Natural killer cell (primary cell): ENCODE measurements at regions of chr2 and their contacts with region 1.

Region 1: DNA sequence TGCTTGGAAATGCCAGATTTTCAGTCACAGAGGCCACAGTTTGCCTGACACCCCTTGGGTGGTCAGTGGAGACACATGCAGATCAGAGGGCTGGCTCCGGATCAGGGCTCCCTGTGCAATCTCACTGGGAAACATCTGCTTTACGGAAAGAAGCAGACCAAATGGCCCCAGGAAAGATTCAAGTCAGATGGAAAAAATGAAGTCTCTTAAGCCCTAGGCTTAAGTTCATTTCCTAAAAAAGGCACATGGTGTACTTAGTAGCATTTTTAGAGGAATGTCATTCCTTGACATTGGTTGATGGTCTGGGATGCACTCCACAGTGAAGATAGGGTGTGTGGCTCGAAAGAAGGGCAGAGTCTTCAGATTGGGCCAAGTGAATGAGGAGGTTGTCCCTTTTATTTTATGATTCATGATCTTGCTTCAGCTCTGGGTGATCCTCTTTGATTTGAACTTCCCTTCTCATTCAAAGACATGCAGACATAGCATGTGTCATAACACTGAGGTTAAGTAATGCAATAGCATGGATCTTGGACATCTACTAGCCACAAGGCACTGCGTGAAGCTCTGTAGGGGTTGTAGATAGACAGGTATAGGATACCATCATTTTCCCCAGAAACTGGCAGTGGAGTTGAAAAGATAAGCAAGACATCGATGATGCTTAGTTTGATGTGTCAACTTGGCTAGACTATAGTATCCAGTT is 56.5 kb downstream of the KCNE4 start:
- DNase-seq: no peak
- ATAC-seq: no peak
- H3K4me3 ChIP-seq: no peak overlapping the region
- H3K4me3 Mint-ChIP-seq: no peak overlapping the region
- H3K27ac ChIP-seq: no peak overlapping the region
- H3K27ac Mint-ChIP-seq: no peak overlapping the region
- H3K4me1 ChIP-seq: no peaks in the 10 kb centered on the region
- H3K4me1 Mint-ChIP-seq: no peaks in the 10 kb centered on the region
- H3K27me3 ChIP-seq: no peaks in the 10 kb centered on the region
- H3K27me3 Mint-ChIP-seq: no peaks in the 10 kb centered on the region
- CTCF ChIP-seq: no peak

Region 2: GRCh38 chr2:223044092-223044836 is 64.2 kb before region 1 on chr2:
- intact Hi-C with region 1: loop called (anchors 2 kb)
- DNase-seq: no peak
- ATAC-seq: no peak
- H3K4me3 ChIP-seq: no peak overlapping the region
- H3K4me3 Mint-ChIP-seq: no peak overlapping the region
- H3K27ac ChIP-seq: no peak overlapping the region
- H3K27ac Mint-ChIP-seq: no peak overlapping the region
- H3K4me1 ChIP-seq: peaks cover 5% of the 10 kb centered on the region
- H3K4me1 Mint-ChIP-seq: peaks cover 0 to 13% of the 10 kb centered on the region in 2 donors
- H3K27me3 ChIP-seq: no peaks in the 10 kb centered on the region
- H3K27me3 Mint-ChIP-seq: no peaks in the 10 kb centered on the region
- CTCF ChIP-seq: no peak

Region 3: DNA sequence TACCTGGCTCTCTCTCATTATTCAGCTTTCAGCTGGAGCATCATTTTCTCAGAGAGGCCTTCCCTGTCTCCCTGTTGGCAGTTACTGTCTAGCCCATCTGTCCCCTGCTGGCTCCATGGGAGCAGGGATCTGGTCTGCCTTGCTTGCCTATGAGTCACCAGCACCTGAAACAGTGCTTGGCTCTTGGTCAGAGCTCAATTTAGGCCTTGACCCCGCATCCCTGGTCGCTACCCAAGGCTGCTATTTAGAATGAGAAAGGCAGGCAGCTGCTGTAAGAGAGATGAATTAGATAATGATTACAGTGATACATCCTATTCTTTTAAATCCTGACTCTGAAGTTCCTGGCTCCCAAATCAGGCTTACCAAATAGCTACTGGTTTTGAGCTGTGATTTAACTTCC is 23.6 kb before region 1 on chr2:
- intact Hi-C with region 1: no loop called
- DNase-seq: no peak
- ATAC-seq: no peak
- H3K4me3 ChIP-seq: no peak overlapping the region
- H3K4me3 Mint-ChIP-seq: no peak overlapping the region
- H3K27ac ChIP-seq: no peak overlapping the region
- H3K27ac Mint-ChIP-seq: no peak overlapping the region
- H3K4me1 ChIP-seq: no peaks in the 10 kb centered on the region
- H3K4me1 Mint-ChIP-seq: no peaks in the 10 kb centered on the region
- H3K27me3 ChIP-seq: no peaks in the 10 kb centered on the region
- H3K27me3 Mint-ChIP-seq: no peaks in the 10 kb centered on the region
- CTCF ChIP-seq: no peak